ENCODE measurements at regions of chr4 and their contacts with region 1.

Region 1: DNA sequence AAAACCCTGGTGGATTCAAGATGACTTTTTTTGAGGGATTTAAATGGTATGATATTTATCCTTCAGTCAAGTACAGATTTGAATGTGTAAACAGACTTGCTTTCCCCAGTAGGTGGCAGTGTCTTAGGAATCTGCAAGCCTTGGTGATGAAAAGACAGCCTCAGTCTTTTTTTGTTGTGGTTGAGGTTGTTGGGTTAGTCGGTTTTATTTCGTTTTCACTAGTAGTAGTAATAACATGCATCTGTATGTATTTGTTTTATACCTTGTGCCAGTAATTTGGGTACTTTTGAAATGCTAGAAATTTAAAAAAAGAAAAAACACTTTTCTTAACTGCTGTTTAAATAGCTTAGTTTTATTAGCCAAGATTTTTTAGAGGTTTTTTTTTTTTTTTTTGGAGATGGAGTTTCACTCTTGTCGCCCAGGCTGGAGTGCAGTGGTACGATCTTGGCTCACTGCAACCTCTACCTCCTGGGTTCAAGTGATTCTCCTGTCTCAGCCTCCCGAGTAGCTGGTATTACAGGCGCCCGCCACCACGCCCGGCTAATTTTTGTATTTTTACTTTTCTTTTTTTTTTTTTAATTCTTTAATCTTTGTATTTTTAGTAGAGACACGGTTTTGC is 39.2 kb downstream of the COPS4 start:
- DNase-seq: peak; percentile 26
- H3K4me3 ChIP-seq: no peak overlapping the region
- H3K27me3 ChIP-seq: no peaks in the 10 kb centered on the region
- CTCF ChIP-seq: peak; percentile 66

Region 2: GRCh38 chr4:83046693-83047473 is 27.3 kb before region 1 on chr4:
- CTCF ChIA-PET with region 1: no interaction called
- POLR2A ChIA-PET with region 1: interaction called, 10 read pairs
- DNase-seq: no peak
- H3K4me3 ChIP-seq: no peak overlapping the region
- H3K27me3 ChIP-seq: no peaks in the 10 kb centered on the region
- CTCF ChIP-seq: no peak

Region 3: DNA sequence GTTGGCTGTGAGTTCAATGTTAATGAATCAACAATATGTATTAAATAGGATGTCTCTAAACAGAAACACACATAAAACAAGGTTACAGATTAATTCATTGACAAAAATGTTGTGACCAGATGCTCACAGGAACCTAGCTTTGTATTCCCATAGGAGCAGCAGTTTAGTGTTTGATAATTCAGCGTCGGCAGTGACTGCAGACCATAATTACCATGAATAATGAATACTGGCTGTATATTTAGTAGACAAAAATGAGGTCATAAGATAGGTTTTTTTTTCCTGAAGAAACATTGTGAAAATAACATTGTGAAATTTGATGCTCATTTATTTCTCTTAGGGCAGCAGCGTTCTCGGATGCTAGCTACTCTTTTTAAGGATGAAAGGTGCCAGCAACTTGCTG is 11.5 kb before region 1 on chr4:
- CTCF ChIA-PET with region 1: interaction called, 10 read pairs
- POLR2A ChIA-PET with region 1: no interaction called
- DNase-seq: no peak
- H3K4me3 ChIP-seq: no peak overlapping the region
- H3K27me3 ChIP-seq: no peaks in the 10 kb centered on the region
- CTCF ChIP-seq: no peak

Region 4: GRCh38 chr4:83110223-83110945 is 36.2 kb after region 1 on chr4:
- CTCF ChIA-PET with region 1: interaction called, 11 read pairs
- POLR2A ChIA-PET with region 1: no interaction called
- DNase-seq: peak; percentile 32
- H3K4me3 ChIP-seq: peak overlapping the region; percentile 50
- H3K27me3 ChIP-seq: no peaks in the 10 kb centered on the region
- CTCF ChIP-seq: peak; percentile 84

Region 5: GRCh38 chr4:83252782-83253405 is 178.7 kb after region 1 on chr4:
- CTCF ChIA-PET with region 1: interaction called, 38 read pairs
- POLR2A ChIA-PET with region 1: interaction called, 3 read pairs
- DNase-seq: no peak
- H3K4me3 ChIP-seq: no peak overlapping the region
- H3K27me3 ChIP-seq: no peaks in the 10 kb centered on the region
- CTCF ChIP-seq: peak; percentile 79

Region 6: DNA sequence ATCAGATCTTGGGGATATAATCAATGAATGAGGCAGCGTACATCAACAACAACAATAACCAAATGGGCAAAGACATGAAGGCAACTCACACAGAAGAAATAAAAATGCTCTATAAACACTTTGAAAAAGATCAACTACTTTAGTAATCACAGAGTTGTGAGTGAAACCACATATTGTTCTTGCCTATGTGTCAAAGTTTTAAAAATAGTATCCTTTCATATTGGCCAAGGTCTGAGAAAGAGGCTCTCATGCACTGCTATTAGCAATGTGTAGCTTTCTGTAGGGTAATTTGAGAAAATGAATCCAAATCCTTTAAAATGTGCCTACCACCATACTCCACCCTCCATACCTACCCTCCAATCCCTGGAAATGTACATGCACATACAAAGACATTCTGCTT is 185.4 kb after region 1 on chr4:
- CTCF ChIA-PET with region 1: interaction called, 38 read pairs
- POLR2A ChIA-PET with region 1: no interaction called
- DNase-seq: no peak
- H3K4me3 ChIP-seq: no peak overlapping the region
- H3K27me3 ChIP-seq: no peaks in the 10 kb centered on the region
- CTCF ChIP-seq: no peak